Activated naive CD4-positive, alpha-beta T cell treated with anti-CD3 and anti-CD28 coated beads, Interleukin-2, amount 10 ng/mL, durations not matched to agents 7 days and 5 days (primary cell): ENCODE measurements at regions of chr12 and their contacts with region 1.

Region 1: DNA sequence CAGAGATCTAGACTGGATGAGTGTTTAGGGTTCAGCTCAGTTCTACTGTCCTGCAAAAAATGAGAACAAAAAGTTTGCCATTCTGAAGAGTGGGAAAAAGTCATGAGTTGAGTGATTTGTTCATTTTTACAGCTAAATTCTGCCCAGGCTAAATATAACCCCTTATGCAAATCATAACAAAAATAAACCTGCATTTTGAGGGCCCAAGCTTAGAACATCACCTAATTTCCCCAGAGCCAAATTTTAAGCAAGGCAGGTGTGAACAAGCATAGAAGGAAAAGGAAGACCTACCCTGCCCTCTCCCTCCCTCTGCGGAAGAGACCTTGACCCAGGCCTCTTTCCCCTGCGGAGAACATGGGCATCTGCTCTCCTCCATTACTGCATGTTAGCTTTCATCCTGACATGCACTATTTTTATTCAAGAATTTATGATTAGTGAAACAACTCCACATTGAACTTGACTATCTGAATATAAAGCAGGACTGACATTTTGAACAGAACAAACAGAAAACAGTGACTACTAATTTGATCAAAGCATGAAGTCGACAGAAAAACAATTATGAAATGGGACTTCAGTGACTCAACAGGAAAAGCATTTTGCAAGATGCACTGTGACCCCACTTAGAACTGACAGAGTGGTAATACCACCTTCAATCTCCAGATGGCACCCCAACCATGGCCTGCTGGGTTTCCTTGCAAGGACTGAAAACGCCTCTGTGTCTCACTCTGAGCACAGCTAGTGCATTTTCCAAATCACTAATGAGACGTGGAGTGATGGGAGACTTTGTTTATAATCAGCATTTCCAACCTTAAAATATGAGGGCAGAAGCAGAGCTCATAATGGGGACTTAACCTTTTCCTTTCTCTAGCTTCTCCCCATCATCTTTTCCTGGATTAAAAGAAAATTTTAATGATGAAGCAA is 30.9 kb upstream of the SELPLG start:
- DNase-seq: peak; percentile 90
- H3K4me3 Mint-ChIP-seq: no peak overlapping the region
- H3K27ac Mint-ChIP-seq: peak overlapping the region; percentile 80
- H3K4me1 Mint-ChIP-seq: peaks cover 14% of the 10 kb centered on the region
- H3K27me3 Mint-ChIP-seq: no peaks in the 10 kb centered on the region

Region 2: DNA sequence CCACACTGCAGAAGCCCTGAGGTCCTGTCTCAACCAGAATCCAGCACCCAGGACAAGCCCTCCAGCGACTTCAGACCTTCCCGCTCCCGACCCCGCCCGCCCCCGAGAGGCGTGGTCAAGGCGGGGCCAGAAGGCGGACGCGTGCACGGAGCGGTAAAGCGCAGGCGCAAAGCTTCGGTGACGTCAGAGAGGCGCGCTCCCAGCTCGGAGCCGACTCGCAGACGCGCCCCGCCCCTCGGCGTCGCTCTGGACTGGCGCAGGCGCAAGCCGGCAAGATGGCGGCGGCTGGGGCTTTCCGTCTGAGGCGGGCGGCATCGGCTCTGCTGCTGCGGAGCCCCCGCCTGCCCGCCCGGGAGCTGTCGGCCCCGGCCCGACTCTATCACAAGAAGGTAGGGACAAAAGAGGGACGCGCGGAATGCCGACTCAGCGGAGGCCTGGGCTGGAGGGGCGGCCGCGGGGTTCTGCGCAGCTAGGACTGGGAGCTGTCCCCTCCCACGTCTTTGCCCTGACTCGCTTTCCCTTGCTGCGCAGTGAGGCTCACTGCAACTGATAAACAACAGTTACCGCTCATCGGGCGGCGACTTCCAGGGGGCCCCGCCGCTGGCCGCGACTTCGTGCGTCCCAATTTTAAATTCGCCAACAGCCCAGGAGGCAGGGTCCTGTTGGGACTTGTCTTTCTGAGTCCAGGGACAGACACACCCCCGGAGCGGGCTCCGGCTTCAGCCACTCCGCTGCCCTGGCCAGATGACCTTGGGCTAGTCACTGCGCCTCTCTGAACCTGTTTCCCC is 102.1 kb before region 1 on chr12 and contains the start of gene ISCU:
- CTCF ChIA-PET with region 1: interaction called, 12 read pairs
- DNase-seq: peak; percentile 99
- H3K4me3 Mint-ChIP-seq: peak within 1 kb of the TSS; percentile 98
- H3K27ac Mint-ChIP-seq: peak within 1 kb of the TSS; percentile 97
- H3K4me1 Mint-ChIP-seq: peaks cover 66% of the 10 kb centered on the region
- H3K27me3 Mint-ChIP-seq: no peaks in the 10 kb centered on the region

Region 3: GRCh38 chr12:108580531-108580930 is 84.1 kb before region 1 on chr12:
- CTCF ChIA-PET with region 1: no interaction called
- DNase-seq: no peak
- H3K4me3 Mint-ChIP-seq: no peak overlapping the region
- H3K27ac Mint-ChIP-seq: no peak overlapping the region
- H3K4me1 Mint-ChIP-seq: peaks cover 11% of the 10 kb centered on the region
- H3K27me3 Mint-ChIP-seq: peaks cover 13% of the 10 kb centered on the region

Region 4: GRCh38 chr12:108618079-108618952 is 46.3 kb before region 1 on chr12:
- CTCF ChIA-PET with region 1: interaction called, 19 read pairs
- DNase-seq: peak; percentile 78
- H3K4me3 Mint-ChIP-seq: no peak overlapping the region
- H3K27ac Mint-ChIP-seq: peak overlapping the region; percentile 83
- H3K4me1 Mint-ChIP-seq: peaks cover 66% of the 10 kb centered on the region
- H3K27me3 Mint-ChIP-seq: no peaks in the 10 kb centered on the region

Region 5: DNA sequence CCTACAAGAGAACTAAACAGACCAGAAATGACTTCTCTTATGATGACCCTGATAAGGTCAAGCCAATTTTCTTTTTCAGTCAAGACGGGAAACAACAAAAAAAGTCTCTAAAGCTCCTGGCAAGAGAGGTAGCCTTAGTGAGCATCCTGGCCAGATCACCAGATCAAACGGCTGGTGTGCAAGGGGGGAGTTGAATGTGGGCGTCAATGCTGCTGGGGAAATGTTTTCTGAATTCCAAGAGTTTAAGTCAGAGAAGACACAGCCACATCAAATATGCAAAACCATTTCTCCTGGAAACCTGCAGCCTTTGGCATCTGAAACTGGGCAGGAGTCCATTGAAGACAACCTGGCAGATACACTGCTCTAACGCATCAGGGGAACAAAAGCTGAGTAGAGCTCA is 14.9 kb before region 1 on chr12:
- CTCF ChIA-PET with region 1: interaction called, 11 read pairs
- DNase-seq: no peak
- H3K4me3 Mint-ChIP-seq: no peak overlapping the region
- H3K27ac Mint-ChIP-seq: no peak overlapping the region
- H3K4me1 Mint-ChIP-seq: peaks cover 33% of the 10 kb centered on the region
- H3K27me3 Mint-ChIP-seq: no peaks in the 10 kb centered on the region

Region 6: GRCh38 chr12:108734200-108734906 is 69.8 kb after region 1 on chr12:
- CTCF ChIA-PET with region 1: interaction called, 10 read pairs
- DNase-seq: no peak
- H3K4me3 Mint-ChIP-seq: no peak overlapping the region
- H3K27ac Mint-ChIP-seq: no peak overlapping the region
- H3K4me1 Mint-ChIP-seq: peaks cover 25% of the 10 kb centered on the region
- H3K27me3 Mint-ChIP-seq: peaks cover 16% of the 10 kb centered on the region

Region 7: DNA sequence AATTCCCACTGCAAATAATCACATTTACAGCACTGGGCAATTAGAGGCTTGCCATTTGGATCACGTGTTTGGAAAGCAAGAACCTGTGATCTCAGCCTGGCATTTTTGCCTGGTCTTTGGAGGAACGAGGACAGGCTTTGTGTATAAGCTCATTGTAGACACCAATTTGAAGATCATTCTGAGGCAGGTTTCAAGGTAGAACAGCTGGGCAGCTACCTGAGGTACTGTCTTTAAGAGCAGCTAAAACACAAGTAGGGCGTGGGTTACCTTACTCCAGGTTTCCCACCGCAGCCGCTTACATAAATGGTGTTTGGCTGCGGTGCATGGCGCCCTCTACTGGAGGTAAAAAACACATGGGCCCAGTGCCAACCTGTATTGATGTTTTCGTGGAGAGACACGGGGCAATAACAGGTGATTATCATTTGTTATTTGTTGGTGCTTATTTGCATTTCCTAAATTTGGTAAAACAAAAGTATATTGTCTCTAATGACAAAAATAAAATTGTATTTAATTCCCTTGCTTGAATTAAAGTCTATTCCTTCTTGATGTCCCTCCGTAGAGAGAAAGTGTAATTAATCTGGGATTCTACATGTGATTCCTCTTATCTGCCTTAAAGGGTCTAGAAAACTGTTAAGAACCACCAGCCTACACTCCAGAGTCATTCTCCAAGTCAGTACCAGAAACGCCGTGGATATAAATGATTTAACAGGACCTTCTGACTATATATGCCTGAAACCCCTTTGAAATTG is 286.6 kb after region 1 on chr12:
- CTCF ChIA-PET with region 1: interaction called, 24 read pairs
- DNase-seq: peak; percentile 81
- H3K4me3 Mint-ChIP-seq: no peak overlapping the region
- H3K27ac Mint-ChIP-seq: no peak overlapping the region
- H3K4me1 Mint-ChIP-seq: peaks cover 2% of the 10 kb centered on the region
- H3K27me3 Mint-ChIP-seq: peaks cover 23% of the 10 kb centered on the region